CD4-positive, alpha-beta T cell (primary cell): ENCODE measurements at regions of chr9 and their contacts with region 1.

Region 1: GRCh38 chr9:3887786-3888496 is 362.1 kb upstream of the RFX3 start:
- DNase-seq: no peak
- ATAC-seq: no peak
- H3K4me3 ChIP-seq: no peak overlapping the region
- H3K4me3 Mint-ChIP-seq: no peak overlapping the region
- H3K27ac ChIP-seq: no peak overlapping the region
- H3K27ac Mint-ChIP-seq: no peak overlapping the region
- H3K4me1 ChIP-seq: no peaks in the 10 kb centered on the region
- H3K4me1 Mint-ChIP-seq: no peaks in the 10 kb centered on the region
- H3K27me3 ChIP-seq: peaks cover 0 to 3% of the 10 kb centered on the region in 2 experiments
- H3K27me3 Mint-ChIP-seq: peaks cover 7% of the 10 kb centered on the region
- CTCF ChIP-seq: no peak

Region 2: GRCh38 chr9:3868012-3868411 is 19.9 kb before region 1 on chr9:
- CTCF ChIA-PET with region 1: no interaction called
- POLR2A ChIA-PET with region 1: no interaction called
- intact Hi-C with region 1: loop called in 1 of 2 experiments (anchors 2 kb)
- DNase-seq: no peak
- ATAC-seq: no peak
- H3K4me3 ChIP-seq: no peak overlapping the region
- H3K4me3 Mint-ChIP-seq: no peak overlapping the region
- H3K27ac ChIP-seq: no peak overlapping the region
- H3K27ac Mint-ChIP-seq: no peak overlapping the region
- H3K4me1 ChIP-seq: no peaks in the 10 kb centered on the region
- H3K4me1 Mint-ChIP-seq: no peaks in the 10 kb centered on the region
- H3K27me3 ChIP-seq: no peaks in the 10 kb centered on the region
- H3K27me3 Mint-ChIP-seq: peaks cover 16% of the 10 kb centered on the region
- CTCF ChIP-seq: no peak

Region 3: DNA sequence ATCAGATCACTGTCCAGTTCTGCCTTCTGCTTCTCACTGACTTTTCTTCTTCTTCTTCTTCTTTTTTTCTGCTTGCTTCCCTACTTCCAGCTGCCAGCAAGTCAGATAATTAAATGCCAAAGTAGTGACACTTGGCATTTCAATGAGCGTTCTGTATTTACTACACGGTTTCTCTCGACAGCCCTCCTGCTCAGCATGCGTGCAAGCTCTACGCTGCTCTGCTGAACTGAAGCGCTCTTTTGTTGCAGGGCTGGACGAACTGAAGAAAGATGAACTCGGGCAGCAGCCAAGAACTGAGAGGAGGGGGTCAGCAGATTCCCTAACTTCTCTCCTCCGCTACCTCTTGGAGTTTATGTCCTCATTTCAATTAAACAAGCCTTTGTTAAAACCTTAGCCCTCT is 92.8 kb after region 1 on chr9:
- CTCF ChIA-PET with region 1: no interaction called
- POLR2A ChIA-PET with region 1: no interaction called
- intact Hi-C with region 1: no loop called
- DNase-seq: no peak
- ATAC-seq: no peak
- H3K4me3 ChIP-seq: no peak overlapping the region
- H3K4me3 Mint-ChIP-seq: no peak overlapping the region
- H3K27ac ChIP-seq: no peak overlapping the region
- H3K27ac Mint-ChIP-seq: no peak overlapping the region
- H3K4me1 ChIP-seq: no peaks in the 10 kb centered on the region
- H3K4me1 Mint-ChIP-seq: no peaks in the 10 kb centered on the region
- H3K27me3 ChIP-seq: no peaks in the 10 kb centered on the region
- H3K27me3 Mint-ChIP-seq: no peaks in the 10 kb centered on the region
- CTCF ChIP-seq: no peak